ENCODE measurements at regions of chr13 and their contacts with region 1.

Region 1: DNA sequence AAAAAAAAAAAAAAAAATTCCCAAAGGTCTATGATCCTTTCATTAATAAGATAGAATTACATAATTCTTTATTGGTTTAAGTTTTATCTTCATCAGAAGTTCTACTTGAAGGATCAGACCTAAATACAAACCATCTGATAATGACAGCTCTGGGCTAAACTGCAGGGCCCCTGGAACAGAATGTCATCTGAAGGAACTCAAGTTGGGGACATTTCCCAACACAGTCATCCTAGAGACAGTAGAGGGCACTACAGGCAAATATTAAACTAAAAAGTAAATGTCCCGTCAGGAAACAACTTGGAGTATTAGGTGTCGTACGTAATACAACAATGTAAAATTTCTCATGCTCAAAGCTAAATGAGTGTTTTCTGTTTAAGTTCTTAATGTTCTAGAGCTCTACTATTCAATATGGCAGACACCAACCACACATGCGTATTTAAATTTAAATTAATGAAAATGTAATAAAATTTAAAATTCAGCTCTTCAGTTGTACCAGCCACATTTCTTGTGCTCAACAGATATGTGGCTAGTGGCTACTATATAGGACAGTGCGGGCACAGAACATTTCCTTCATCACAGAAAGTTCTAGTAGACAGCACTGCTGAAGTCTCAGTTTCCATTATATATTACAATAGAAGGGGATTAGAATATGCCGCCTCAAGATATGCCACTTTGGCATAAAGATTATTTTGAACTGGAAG is 21.8 kb upstream of the NAXD start:
- DNase-seq: peak in 1 of 3 donors; percentile 47
- ATAC-seq: peak; percentile 86
- H3K4me3 ChIP-seq: no peak overlapping the region
- H3K4me1 ChIP-seq: no peaks in the 10 kb centered on the region
- CTCF ChIP-seq: no peak

Region 2: GRCh38 chr13:110652231-110652730 is 58.7 kb after region 1 on chr13:
- intact Hi-C with region 1: loop called in 1 of 2 experiments (anchors 10 kb)
- DNase-seq: no peak
- ATAC-seq: no peak
- H3K4me3 ChIP-seq: no peak overlapping the region
- H3K4me1 ChIP-seq: no peaks in the 10 kb centered on the region
- CTCF ChIP-seq: no peak

Region 3: DNA sequence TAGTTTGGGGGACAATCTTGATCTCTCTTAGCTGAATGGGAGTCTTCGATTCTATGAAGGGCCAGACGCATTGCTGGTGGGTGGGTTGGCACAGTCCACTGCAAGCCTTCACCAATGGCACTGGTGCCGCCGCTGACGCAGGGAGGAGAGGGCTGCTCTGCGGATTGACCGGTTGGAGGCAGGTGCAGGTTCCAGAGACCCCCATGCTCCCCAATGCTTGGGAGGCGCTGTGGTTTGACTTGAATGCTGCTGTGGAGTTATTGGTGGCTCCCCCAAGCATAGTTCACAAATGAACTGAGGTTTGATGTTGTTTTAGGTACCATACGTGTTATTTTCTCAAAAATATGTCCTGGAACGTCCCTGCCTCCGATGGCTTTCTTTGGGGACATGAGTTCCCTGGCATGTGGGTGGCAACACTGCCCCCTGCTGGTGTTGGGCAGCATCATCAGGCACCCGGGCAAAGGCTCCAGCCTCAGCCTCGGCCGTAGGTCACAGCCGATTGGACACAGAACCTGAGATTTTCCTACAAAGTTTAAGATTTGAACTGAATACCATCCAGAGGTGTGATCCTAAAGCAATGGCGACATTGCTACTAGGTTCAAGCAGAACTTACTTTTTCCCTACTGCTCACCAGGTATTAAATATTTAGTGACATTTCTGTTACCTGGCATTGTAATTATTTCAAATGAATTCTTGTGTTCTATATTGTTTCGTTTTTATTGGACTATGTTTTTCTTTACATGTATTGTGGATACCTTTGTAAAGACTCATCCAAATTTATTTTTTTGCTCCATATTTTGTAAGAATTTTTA is 225.8 kb after region 1 on chr13:
- intact Hi-C with region 1: loop called (anchors 10 kb)
- DNase-seq: peak; percentile 78 to 88 (median 82)
- ATAC-seq: peak; percentile 95
- H3K4me3 ChIP-seq: no peak overlapping the region
- H3K4me1 ChIP-seq: peaks cover 6% of the 10 kb centered on the region
- CTCF ChIP-seq: peak; percentile 93

Measured in mucosa of descending colon (tissue), 3 donors.